Left colon (tissue), 2 donors: ENCODE measurements at regions of chr1 and their contacts with region 1.

Region 1: GRCh38 chr1:150537732-150538684 is 11.2 kb upstream of the ADAMTSL4 start:
- DNase-seq: peak in 1 of 2 donors; percentile 30
- ATAC-seq: no peak

Region 2: GRCh38 chr1:150477733-150478132 is 60.3 kb before region 1 on chr1:
- intact Hi-C with region 1: loop called in 1 of 2 experiments (anchors 10 kb)
- DNase-seq: no peak
- ATAC-seq: peak; percentile 83

Region 3: DNA sequence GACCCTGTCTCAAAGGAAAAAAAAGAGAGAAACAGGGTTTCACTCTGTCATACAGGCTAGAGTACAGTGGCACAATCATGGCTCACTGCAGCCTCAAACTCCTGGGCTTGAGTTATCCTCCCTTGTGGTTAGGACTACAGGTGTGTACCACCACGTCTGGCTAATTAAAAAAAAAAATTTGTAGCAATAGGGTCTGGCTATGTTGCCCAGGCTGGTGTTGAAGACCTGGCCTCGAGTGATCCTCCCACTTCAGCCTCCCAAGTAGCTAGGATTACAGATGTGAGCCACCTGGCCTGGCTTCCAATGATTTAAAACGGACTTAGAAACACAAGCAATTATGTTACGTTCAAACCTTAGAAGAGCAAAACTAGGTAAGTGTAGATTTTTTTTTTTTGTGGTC is 136.9 kb after region 1 on chr1:
- intact Hi-C with region 1: no loop called
- DNase-seq: no peak
- ATAC-seq: no peak